Sigmoid colon (tissue), 7 donors: ENCODE measurements at regions of chr18 and their contacts with region 1.

Region 1: GRCh38 chr18:45664824-45665763 is 49.8 kb downstream of the SLC14A2 start:
- DNase-seq: no peak
- H3K4me3 ChIP-seq: no peak overlapping the region
- H3K27ac ChIP-seq: no peak overlapping the region
- H3K4me1 ChIP-seq: peaks cover 0 to 11% (median 3%) of the 10 kb centered on the region in 4 donors
- H3K27me3 ChIP-seq: no peaks in the 10 kb centered on the region
- CTCF ChIP-seq: peak; percentile 56 to 90 (median 76)
- EP300 ChIP-seq: no peak
- POLR2A ChIP-seq: no peak

Region 2: DNA sequence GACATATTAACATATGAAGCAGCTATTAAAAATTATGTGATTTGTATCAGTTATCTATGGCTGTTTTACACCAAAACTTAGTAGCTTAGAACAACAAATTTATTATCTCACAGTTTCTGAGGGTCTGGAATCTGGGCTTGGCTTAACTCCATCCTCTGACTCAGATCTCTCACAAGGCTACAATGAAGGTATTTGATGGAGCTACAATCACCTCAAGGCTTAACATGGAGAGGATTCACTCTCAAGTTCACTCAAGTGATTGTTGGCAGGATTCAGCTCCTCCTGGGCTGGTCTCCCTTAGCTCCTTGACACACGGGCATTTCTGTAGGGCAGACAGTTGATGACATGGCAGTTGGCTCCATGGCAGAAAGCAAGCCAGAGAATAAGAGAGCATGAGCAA is 182.8 kb before region 1 on chr18:
- intact Hi-C with region 1: no loop called
- DNase-seq: no peak
- H3K4me3 ChIP-seq: no peak overlapping the region
- H3K27ac ChIP-seq: no peak overlapping the region
- H3K4me1 ChIP-seq: peaks cover 0 to 6% (median 0%) of the 10 kb centered on the region in 4 donors
- H3K27me3 ChIP-seq: no peaks in the 10 kb centered on the region
- CTCF ChIP-seq: no peak
- EP300 ChIP-seq: no peak
- POLR2A ChIP-seq: no peak

Region 3: GRCh38 chr18:45621061-45621511 is 44.0 kb before region 1 on chr18:
- intact Hi-C with region 1: loop called (anchors 2 kb)
- DNase-seq: no peak
- H3K4me3 ChIP-seq: no peak overlapping the region
- H3K27ac ChIP-seq: no peak overlapping the region
- H3K4me1 ChIP-seq: peaks cover 0 to 32% (median 24%) of the 10 kb centered on the region in 4 donors
- H3K27me3 ChIP-seq: no peaks in the 10 kb centered on the region
- CTCF ChIP-seq: peak; percentile 34 to 97 (median 81)
- EP300 ChIP-seq: no peak
- POLR2A ChIP-seq: no peak

Region 4: DNA sequence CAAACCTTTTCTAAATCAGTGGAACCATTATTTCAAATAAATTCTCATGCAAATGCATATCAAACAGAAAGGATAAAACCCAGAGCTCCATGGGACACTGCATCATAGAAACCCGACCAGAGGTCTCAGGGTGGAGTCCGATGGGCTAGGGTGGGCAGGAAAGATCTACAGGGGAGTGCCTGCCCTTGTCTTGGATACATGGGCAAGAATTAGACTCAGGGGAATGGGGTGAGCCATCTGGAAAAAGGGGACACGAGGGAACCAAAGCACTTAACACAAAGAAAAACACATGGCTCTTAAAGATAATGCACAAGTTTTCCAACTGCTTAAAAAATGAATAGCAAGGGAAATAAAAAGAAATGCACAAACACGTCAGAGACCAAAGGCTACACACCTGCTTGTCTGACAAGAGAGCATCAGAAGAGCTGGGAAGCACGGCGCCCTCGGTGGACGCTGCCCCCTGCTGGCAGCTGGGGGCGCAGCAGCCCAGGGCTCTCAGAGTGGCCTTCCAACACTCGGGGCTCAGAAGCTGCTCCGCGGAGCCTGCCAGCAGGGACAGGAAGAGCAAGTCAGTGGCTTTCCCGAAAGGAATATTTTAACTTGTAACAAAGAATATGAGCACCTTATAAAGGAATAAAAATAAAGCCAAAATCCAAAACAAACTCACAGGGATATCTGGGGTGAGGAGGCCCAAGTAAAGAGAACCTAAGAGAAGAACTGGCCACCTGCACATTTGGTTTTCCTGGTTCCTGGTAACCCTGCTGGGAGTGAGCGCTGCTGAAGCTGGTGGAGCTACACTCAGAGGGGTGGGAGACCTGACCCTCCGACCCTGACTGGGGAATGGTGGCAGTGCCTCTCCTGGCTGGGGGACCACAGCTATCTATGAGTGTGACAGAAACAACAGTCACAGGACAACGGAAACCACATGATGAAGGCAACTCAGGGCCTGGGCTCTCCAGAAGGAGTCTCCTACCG is 214.9 kb after region 1 on chr18:
- intact Hi-C with region 1: loop called (anchors 10 kb)
- DNase-seq: peak; percentile 86
- H3K4me3 ChIP-seq: no peak overlapping the region
- H3K27ac ChIP-seq: no peak overlapping the region
- H3K4me1 ChIP-seq: peaks cover 0 to 7% (median 2%) of the 10 kb centered on the region in 4 donors
- H3K27me3 ChIP-seq: no peaks in the 10 kb centered on the region
- CTCF ChIP-seq: peak; percentile 74 to 99 (median 86)
- EP300 ChIP-seq: no peak
- POLR2A ChIP-seq: no peak

Region 5: DNA sequence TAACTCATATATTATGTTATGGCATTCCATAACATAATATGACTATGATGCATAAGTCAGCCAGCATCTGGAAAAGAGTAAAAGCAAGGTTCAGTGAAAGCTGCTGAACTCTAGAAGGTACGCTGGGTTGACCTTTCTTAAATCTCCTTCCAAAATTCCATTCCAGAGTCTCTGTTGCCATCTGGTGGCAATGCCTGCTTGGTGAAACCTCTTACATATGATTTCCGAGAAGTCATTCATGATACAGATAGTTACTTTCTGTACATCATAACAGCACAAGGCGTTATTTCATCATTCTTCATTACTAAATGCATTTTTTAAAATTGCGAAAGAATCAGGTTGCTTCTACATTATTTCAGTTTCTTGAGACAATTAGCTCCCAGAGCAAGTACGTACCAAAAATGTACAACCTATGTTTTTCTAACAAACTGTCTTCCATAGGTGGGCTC is 309.0 kb after region 1 on chr18:
- intact Hi-C with region 1: loop called (anchors 10 kb)
- DNase-seq: no peak
- H3K4me3 ChIP-seq: no peak overlapping the region
- H3K27ac ChIP-seq: no peak overlapping the region
- H3K4me1 ChIP-seq: no peaks in the 10 kb centered on the region
- H3K27me3 ChIP-seq: no peaks in the 10 kb centered on the region
- CTCF ChIP-seq: peak in 2 of 4 experiments; percentile 58 to 62
- EP300 ChIP-seq: no peak
- POLR2A ChIP-seq: no peak

Region 6: DNA sequence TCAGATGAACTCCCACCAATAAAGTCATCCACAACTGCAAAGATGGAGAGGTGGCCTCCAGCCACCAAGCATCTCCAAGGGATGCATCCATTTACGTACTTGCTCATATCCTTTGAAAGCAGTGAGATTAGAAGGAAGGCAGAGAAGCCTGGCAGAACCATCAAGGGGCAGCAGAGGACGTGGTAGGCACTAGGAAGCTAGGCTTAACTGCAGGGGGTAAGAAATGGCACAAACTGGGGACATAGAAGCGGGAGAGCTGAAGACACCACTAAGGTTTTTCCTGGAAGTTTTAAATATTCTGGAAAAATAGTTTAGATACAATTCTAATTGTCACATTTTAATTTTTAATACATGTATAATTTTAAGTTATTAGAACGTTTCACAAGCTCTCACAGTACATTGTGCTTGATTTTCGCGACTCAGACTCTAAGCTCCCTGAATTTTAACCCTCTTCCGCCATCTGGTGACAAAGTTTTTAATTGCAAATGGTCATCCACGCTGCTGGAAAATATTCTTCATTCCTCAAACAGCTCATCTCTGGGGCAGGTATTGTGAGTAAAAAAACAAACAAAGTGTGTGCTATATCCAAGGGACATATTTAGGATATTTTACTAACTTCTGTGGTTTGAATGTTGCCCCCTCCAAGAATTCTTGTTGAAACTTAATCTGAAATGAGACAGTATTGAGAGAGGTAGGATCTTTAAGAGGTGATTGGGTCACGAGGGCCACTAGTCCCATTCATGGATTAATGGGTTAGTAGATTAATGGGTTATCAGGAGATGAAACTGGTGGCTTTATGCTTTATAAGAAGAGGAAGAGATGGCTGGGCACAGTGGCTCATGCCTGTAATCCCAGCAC is 408.6 kb after region 1 on chr18:
- intact Hi-C with region 1: loop called (anchors 10 kb)
- DNase-seq: no peak
- H3K4me3 ChIP-seq: no peak overlapping the region
- H3K27ac ChIP-seq: no peak overlapping the region
- H3K4me1 ChIP-seq: peaks cover 0 to 38% (median 35%) of the 10 kb centered on the region in 4 donors
- H3K27me3 ChIP-seq: no peaks in the 10 kb centered on the region
- CTCF ChIP-seq: peak; percentile 40 to 56 (median 50)
- EP300 ChIP-seq: no peak
- POLR2A ChIP-seq: no peak